Endothelial cell of umbilical vein (primary cell): ENCODE measurements at regions of chr9 and their contacts with region 1.

Region 1: DNA sequence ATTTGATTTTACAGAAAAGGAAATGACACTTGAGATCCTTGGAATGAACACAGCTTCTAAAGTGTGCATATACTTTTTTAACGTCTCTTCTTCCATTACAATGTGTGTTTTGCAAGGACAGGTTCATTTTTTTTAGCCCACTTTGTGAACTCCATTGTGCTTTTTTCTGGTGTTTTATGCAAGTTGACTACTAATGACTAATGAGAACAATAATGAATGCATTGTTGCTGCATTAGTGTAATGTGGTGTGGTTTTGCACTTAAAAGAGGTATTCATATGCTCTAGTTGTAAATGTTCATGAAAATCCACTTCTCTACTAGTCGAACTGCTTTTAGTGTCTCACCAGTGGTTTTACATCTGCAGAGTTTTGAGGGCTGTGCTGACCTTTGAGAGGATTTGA is 93.6 kb downstream of the UHRF2 start:
- DNase-seq: no peak
- H3K4me3 ChIP-seq: no peak overlapping the region
- H3K27ac ChIP-seq: no peak overlapping the region
- H3K4me1 ChIP-seq: peaks cover 3% of the 10 kb centered on the region
- H3K27me3 ChIP-seq: no peaks in the 10 kb centered on the region
- CTCF ChIP-seq: no peak
- POLR2A ChIP-seq: no peak

Region 2: GRCh38 chr9:6428940-6429889 is 77.4 kb before region 1 on chr9:
- CTCF ChIA-PET with region 1: no interaction called
- POLR2A ChIA-PET with region 1: no interaction called
- dilution Hi-C with region 1: no loop called
- intact Hi-C with region 1: no loop called
- DNase-seq: no peak
- H3K4me3 ChIP-seq: no peak overlapping the region
- H3K27ac ChIP-seq: no peak overlapping the region
- H3K4me1 ChIP-seq: peaks cover 37% of the 10 kb centered on the region
- H3K27me3 ChIP-seq: no peaks in the 10 kb centered on the region
- CTCF ChIP-seq: no peak
- POLR2A ChIP-seq: no peak

Region 3: DNA sequence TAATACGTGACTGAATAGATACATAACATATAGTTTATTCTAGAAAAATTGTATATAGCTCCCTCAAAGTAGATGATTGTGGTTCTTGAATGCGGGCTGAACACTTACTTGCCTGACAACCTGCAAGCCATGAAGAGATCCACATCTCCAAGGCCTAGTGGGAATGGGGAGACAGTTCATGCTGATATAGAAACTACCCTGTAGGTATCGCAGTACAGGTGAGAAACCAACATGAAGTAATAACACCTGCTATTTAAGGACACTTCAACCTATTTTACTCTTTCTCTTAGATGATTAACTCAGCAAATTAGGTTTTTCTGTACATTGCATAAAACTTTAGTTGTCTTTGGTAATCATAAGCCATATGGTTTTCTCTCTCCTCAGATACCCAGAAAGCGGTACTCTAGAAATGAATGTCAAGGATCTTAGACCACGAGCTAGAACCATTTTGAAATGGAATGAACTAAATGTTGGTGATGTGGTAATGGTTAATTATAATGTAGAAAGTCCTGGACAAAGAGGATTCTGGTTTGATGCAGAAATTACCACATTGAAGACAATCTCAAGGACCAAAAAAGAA is 46.3 kb before region 1 on chr9:
- CTCF ChIA-PET with region 1: no interaction called
- POLR2A ChIA-PET with region 1: no interaction called
- dilution Hi-C with region 1: no loop called
- intact Hi-C with region 1: no loop called
- DNase-seq: no peak
- H3K4me3 ChIP-seq: no peak overlapping the region
- H3K27ac ChIP-seq: no peak overlapping the region
- H3K4me1 ChIP-seq: no peaks in the 10 kb centered on the region
- H3K27me3 ChIP-seq: no peaks in the 10 kb centered on the region
- CTCF ChIP-seq: no peak
- POLR2A ChIP-seq: no peak

Region 4: DNA sequence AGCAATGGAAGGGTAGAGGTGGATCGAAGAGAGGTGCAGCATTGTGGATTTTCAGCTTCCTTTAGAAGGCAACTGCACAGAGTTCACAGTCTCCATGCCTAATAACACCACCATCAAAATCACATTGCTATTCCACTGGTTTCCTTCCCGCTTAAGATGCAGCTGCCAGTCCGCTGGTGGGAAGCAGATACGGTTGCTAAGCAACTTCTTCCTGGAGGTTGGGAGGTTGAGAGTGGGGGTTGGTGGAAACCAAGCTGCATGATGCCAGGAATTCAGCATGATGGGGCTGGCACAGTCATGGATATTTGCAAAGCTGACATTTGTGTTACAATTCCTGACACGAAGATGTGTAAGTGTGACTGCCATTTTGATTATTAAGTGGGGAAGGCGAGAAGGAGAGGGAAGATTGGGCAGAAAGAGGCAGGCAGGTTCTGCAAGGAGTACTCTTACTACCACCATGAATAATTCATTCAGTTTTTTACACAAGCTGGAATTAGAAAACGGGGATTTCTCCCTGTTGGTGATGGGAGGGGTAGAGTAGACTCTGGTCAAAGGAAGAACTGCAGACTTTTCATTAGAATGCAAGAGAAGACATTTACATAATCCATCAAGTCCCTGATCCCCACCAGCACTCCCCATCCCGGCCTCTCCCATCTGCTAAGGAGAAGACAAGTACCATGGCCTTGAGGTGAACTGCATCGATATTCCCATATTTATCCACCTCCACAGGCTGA is 51.5 kb after region 1 on chr9:
- CTCF ChIA-PET with region 1: no interaction called
- POLR2A ChIA-PET with region 1: no interaction called
- dilution Hi-C with region 1: no loop called
- intact Hi-C with region 1: loop called (anchors 2 kb)
- DNase-seq: peak; percentile 98
- H3K4me3 ChIP-seq: no peak overlapping the region
- H3K27ac ChIP-seq: peak overlapping the region; percentile 92
- H3K4me1 ChIP-seq: peaks cover 49% of the 10 kb centered on the region
- H3K27me3 ChIP-seq: no peaks in the 10 kb centered on the region
- CTCF ChIP-seq: no peak
- POLR2A ChIP-seq: peak; percentile 58